ENCODE measurements at regions of chr3 and their contacts with region 1.

Region 1: GRCh38 chr3:101195951-101196713 is 124.2 kb downstream of the IMPG2 start:
- DNase-seq: peak; percentile 60
- H3K4me3 ChIP-seq: no peak overlapping the region
- H3K27ac ChIP-seq: peak overlapping the region; percentile 39
- H3K4me1 ChIP-seq: peaks cover 15% of the 10 kb centered on the region
- H3K27me3 ChIP-seq: no peaks in the 10 kb centered on the region
- CTCF ChIP-seq: peak; percentile 61 to 74

Region 2: GRCh38 chr3:100737334-100737733 is 458.8 kb before region 1 on chr3:
- CTCF ChIA-PET with region 1: no interaction called
- dilution Hi-C with region 1: no loop called
- in situ Hi-C with region 1: no loop called
- intact Hi-C with region 1: loop called (anchors 5 kb)
- DNase-seq: peak; percentile 25
- H3K4me3 ChIP-seq: no peak overlapping the region
- H3K27ac ChIP-seq: no peak overlapping the region
- H3K4me1 ChIP-seq: no peaks in the 10 kb centered on the region
- H3K27me3 ChIP-seq: no peaks in the 10 kb centered on the region
- CTCF ChIP-seq: peak; percentile 19 to 42

Region 3: DNA sequence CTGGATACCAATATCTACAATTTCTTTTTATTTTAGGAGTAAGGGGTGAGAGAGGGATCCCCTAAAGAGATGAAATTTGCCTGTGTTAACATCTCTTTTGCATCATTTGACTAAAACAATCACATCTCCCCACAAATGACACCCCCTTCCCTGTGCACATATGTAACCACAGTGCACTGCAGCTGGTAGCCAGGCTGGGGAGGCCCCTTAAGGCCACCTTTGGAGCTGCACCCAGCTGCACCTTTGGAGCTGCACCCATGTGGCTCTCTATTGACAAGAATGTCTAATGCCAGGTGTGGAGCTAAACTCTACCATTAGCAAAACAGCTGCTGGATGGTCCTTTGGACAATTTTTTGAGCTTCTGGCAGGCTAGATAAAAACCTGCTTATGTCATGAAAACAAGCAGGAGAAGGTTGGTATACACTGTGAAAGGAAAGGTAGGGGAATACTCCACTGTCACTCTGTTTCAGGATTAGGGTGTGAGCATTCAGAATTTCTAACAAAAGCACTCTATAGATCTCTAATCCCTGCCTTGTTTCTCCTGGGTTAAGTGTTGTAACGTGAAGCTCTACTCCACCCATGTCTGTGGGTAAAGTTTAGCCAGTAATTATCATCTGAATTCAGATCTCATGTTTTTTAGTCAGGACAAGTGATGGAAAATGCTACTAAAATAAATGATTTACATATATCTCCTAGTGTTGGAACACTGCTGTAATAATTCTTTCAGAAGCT is 434.8 kb before region 1 on chr3:
- CTCF ChIA-PET with region 1: interaction called, 4 read pairs
- dilution Hi-C with region 1: no loop called
- in situ Hi-C with region 1: loop called in 1 of 2 experiments (anchors 25 kb)
- intact Hi-C with region 1: no loop called
- DNase-seq: no peak
- H3K4me3 ChIP-seq: no peak overlapping the region
- H3K27ac ChIP-seq: no peak overlapping the region
- H3K4me1 ChIP-seq: peaks cover 8% of the 10 kb centered on the region
- H3K27me3 ChIP-seq: no peaks in the 10 kb centered on the region
- CTCF ChIP-seq: peak; percentile 39 to 47

Region 4: DNA sequence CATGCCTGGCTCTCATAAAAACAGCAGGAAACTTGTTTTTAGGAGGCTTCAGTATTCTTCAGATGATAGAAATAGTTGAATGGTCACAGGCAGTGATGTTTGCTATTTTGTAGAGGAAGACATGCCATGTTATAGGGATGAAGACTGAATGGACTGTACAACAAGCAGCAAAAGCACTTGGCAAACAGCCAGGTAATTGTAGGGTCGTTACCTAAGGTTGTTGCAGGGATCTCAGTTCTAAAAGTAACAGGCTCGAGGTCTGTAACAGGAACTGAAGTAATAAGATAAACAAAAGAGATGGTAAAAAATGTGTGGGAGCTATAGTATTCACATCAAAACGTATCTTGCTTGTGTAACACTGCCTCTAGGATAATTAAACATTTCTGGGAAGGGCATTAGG is 370.6 kb before region 1 on chr3:
- CTCF ChIA-PET with region 1: no interaction called
- dilution Hi-C with region 1: no loop called
- in situ Hi-C with region 1: no loop called
- intact Hi-C with region 1: loop called (anchors 1 kb)
- DNase-seq: no peak
- H3K4me3 ChIP-seq: no peak overlapping the region
- H3K27ac ChIP-seq: no peak overlapping the region
- H3K4me1 ChIP-seq: no peaks in the 10 kb centered on the region
- H3K27me3 ChIP-seq: peaks cover 2% of the 10 kb centered on the region
- CTCF ChIP-seq: no peak

Region 5: GRCh38 chr3:100972867-100973266 is 223.3 kb before region 1 on chr3:
- CTCF ChIA-PET with region 1: no interaction called
- dilution Hi-C with region 1: no loop called
- in situ Hi-C with region 1: no loop called
- intact Hi-C with region 1: loop called (anchors 2 kb)
- DNase-seq: peak; percentile 78
- H3K4me3 ChIP-seq: no peak overlapping the region
- H3K27ac ChIP-seq: no peak overlapping the region
- H3K4me1 ChIP-seq: peaks cover 13% of the 10 kb centered on the region
- H3K27me3 ChIP-seq: no peaks in the 10 kb centered on the region
- CTCF ChIP-seq: peak in 1 of 2 donors; percentile 8

Region 6: GRCh38 chr3:101017017-101017416 is 179.1 kb before region 1 on chr3:
- CTCF ChIA-PET with region 1: interaction called, 6 read pairs
- dilution Hi-C with region 1: no loop called
- in situ Hi-C with region 1: no loop called
- intact Hi-C with region 1: loop called (anchors 1 kb)
- DNase-seq: peak; percentile 31
- H3K4me3 ChIP-seq: no peak overlapping the region
- H3K27ac ChIP-seq: no peak overlapping the region
- H3K4me1 ChIP-seq: no peaks in the 10 kb centered on the region
- H3K27me3 ChIP-seq: no peaks in the 10 kb centered on the region
- CTCF ChIP-seq: no peak

Region 7: DNA sequence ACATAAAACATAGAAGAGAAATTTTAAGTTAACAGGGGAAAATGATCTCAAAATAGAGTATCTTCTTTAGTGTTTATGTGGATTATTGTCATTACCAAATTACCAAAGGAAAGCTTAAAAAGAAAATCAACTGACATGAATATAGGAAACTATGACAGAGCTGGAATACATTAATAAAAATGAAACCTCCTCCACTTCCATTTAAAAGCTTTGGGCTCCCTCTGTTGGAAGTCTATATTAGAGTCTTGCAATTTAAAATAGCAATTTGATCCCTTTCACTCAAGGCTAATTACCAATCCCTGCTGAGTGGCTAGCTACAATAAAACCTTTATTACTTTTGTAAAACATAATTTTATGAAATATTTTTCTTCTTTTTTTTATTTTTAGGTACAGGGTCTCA is 185.7 kb after region 1 on chr3:
- CTCF ChIA-PET with region 1: interaction called, 4 read pairs
- dilution Hi-C with region 1: no loop called
- in situ Hi-C with region 1: no loop called
- intact Hi-C with region 1: loop called (anchors 5 kb)
- DNase-seq: peak; percentile 21
- H3K4me3 ChIP-seq: no peak overlapping the region
- H3K27ac ChIP-seq: no peak overlapping the region
- H3K4me1 ChIP-seq: no peaks in the 10 kb centered on the region
- H3K27me3 ChIP-seq: no peaks in the 10 kb centered on the region
- CTCF ChIP-seq: peak; percentile 45 to 46

Measured in mammary epithelial cell (primary cell).